Dorsolateral prefrontal cortex (tissue), 120 donors: ENCODE measurements at regions of chr7 and their contacts with region 1.

Region 1: GRCh38 chr7:128209229-128210035 is 31.6 kb upstream of the LEP start:
- DNase-seq: peak in 8 of 10 donors; percentile 62 to 82 (median 72)
- H3K4me3 ChIP-seq: no peak overlapping the region
- H3K27ac ChIP-seq: peak overlapping the region in 4 of 59 donors; percentile 24 to 48 (median 34)
- H3K27me3 ChIP-seq: peaks cover 0 to 5% (median 0%) of the 10 kb centered on the region in 45 donors
- CTCF ChIP-seq: peak; percentile 90 to 100 (median 99)

Region 2: GRCh38 chr7:127943541-127944521 is 265.6 kb before region 1 on chr7:
- intact Hi-C with region 1: loop called in 1 of 2 experiments (anchors 10 kb)
- DNase-seq: peak; percentile 55 to 85 (median 76)
- H3K4me3 ChIP-seq: peak overlapping the region in 31 of 59 donors; percentile 1 to 48 (median 24)
- H3K27ac ChIP-seq: peak overlapping the region in 58 of 59 donors; percentile 39 to 92 (median 79)
- H3K27me3 ChIP-seq: no peaks in the 10 kb centered on the region
- CTCF ChIP-seq: peak in 13 of 56 donors; percentile 6 to 38 (median 15)

Region 3: GRCh38 chr7:128135515-128136214 is 73.8 kb before region 1 on chr7:
- intact Hi-C with region 1: loop called (anchors 1 to 2 kb)
- DNase-seq: peak in 7 of 10 donors; percentile 45 to 83 (median 55)
- H3K4me3 ChIP-seq: peak overlapping the region; percentile 45 to 81 (median 69)
- H3K27ac ChIP-seq: peak overlapping the region in 13 of 59 donors; percentile 1 to 74 (median 33)
- H3K27me3 ChIP-seq: peaks cover 0 to 4% (median 0%) of the 10 kb centered on the region in 45 donors
- CTCF ChIP-seq: peak; percentile 50 to 99 (median 88)

Region 4: GRCh38 chr7:128302139-128302538 is 92.7 kb after region 1 on chr7:
- intact Hi-C with region 1: no loop called
- DNase-seq: peak in 4 of 10 donors; percentile 40 to 74 (median 57)
- H3K4me3 ChIP-seq: no peak overlapping the region
- H3K27ac ChIP-seq: peak overlapping the region in 2 of 59 donors; percentile 33 to 37
- H3K27me3 ChIP-seq: no peaks in the 10 kb centered on the region
- CTCF ChIP-seq: no peak